PC-3 (cell line): ENCODE measurements at regions of chr14 and their contacts with region 1.

Region 1: DNA sequence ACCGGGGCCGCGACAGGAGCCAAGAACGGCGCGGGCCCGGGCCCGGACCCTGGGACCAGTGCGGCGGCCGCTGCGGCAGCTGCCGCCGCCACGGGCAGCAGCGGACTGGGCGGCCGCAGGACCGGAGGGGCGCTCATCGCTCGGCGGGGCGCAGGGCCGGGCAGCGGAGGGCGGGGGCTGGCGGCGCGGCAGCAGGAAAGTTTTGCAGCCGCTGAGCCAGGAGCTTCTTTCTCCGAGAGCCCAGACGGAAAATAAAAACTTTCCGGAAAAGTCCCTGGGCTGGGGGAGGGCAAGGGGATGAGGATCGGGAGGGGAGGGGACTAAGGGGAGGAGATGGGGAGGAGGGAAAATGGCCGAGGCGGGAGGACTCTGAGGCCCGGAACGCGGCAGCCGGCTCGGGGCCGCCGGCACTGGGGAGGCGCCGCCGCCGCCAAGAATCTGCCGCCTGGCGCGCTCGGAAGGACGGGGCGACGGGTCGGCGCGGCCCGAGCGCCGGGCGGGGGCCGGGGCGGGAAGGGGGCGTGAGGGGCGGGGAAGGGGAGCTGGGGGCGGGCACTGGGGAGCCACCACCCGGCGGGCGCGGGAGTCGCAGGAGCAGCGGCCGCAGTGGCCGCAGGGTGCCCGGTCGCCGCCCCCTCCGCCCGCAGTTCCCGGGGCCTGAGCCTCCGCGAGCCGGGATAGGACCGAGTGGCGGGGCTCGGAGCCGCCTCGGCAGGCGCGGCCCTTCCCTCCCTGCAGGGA is at the start of gene PRKD1:
- DNase-seq: peak; percentile 42
- ATAC-seq: peak; percentile 54
- H3K4me3 ChIP-seq: peak within 1 kb of the TSS; percentile 74
- H3K27ac ChIP-seq: no peak within 1 kb of the TSS
- H3K4me1 ChIP-seq: peaks cover 18% of the 10 kb centered on the region
- H3K27me3 ChIP-seq: no peaks in the 10 kb centered on the region
- CTCF ChIP-seq: no peak
- total RNA-seq, gene PRKD1: 1.2 and 3.0 TPM in 2 replicates

Region 2: DNA sequence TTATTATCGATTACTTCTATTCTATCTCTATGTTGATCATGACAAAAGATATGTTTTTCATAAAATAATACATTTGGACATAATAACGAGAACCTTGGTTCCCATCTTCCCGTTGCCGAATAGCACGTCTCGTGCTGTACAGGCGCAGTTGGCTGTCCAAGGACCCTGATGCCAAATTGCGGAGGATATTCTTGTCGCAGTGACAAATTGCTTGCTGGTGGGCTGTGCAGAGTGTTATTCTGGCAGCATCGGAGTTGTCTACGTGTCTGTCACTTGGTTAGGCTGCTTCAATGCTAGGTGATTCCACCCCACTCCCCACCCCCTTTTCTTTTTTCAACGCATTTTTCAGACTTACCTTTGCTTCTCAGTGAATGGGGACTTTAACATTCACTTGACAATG is 546.7 kb before region 1 on chr14:
- CTCF ChIA-PET with region 1: no interaction called
- POLR2A ChIA-PET with region 1: interaction called, 13 read pairs
- intact Hi-C with region 1: no loop called
- DNase-seq: no peak
- ATAC-seq: no peak
- H3K4me3 ChIP-seq: no peak overlapping the region
- H3K27ac ChIP-seq: no peak overlapping the region
- H3K4me1 ChIP-seq: no peaks in the 10 kb centered on the region
- H3K27me3 ChIP-seq: peaks cover 8% of the 10 kb centered on the region; the same call in 1 of the 2 replicates
- CTCF ChIP-seq: no peak

Region 3: DNA sequence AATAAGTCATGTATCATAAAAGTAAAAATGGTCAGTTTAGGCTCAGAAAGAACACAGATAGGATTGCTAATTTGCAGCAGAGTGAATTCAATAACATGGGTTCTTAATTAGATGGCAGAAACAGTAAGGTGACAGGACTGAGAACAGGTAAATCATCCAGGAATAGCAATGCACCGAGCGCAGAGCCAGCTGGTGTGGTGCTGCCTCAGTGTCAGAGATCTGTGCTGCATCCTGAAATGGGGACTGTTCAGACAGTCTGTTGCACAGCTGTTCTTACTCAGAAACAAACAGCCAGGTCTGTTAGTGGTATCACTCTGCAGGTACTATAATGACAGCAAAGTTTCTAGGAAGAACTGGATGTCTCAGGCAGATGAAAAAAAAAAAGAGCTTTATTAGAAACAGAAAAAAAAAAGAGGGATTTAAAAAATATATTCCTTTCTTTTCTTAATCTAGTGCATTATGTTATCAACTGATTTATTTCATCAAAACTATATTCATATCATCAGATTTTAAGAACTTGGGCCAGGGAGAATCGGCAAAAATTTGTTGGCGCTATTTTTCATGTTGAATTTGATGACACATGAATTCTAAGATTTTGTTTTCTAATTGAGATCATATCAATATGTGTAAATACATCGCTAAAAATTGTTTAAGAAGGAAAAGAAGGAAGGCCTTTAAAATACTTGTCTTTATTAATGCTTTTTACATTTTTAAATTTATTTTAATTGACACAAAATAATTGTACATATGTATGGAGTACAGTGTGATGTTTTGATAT is 501.7 kb before region 1 on chr14:
- CTCF ChIA-PET with region 1: no interaction called
- POLR2A ChIA-PET with region 1: no interaction called
- intact Hi-C with region 1: no loop called
- DNase-seq: no peak
- ATAC-seq: no peak
- H3K4me3 ChIP-seq: no peak overlapping the region
- H3K27ac ChIP-seq: no peak overlapping the region
- H3K4me1 ChIP-seq: no peaks in the 10 kb centered on the region
- H3K27me3 ChIP-seq: peaks cover 35% of the 10 kb centered on the region
- CTCF ChIP-seq: no peak

Region 4: GRCh38 chr14:30214461-30215090 is 287.0 kb after region 1 on chr14:
- CTCF ChIA-PET with region 1: no interaction called
- POLR2A ChIA-PET with region 1: no interaction called
- intact Hi-C with region 1: loop called (anchors 10 kb)
- DNase-seq: peak; percentile 74
- ATAC-seq: peak; percentile 79
- H3K4me3 ChIP-seq: no peak overlapping the region
- H3K27ac ChIP-seq: no peak overlapping the region
- H3K4me1 ChIP-seq: no peaks in the 10 kb centered on the region
- H3K27me3 ChIP-seq: no peaks in the 10 kb centered on the region
- CTCF ChIP-seq: peak; percentile 89